Transverse colon (tissue), 4 donors: ENCODE measurements at regions of chr7 and their contacts with region 1.

Region 1: GRCh38 chr7:17298207-17298839 is at the start of gene AHR:
- DNase-seq: peak; percentile 95
- H3K4me3 ChIP-seq: peak within 1 kb of the TSS; percentile 69 to 95 (median 83)
- H3K27ac ChIP-seq: peak within 1 kb of the TSS; percentile 93 to 98 (median 98)
- H3K4me1 ChIP-seq: peaks cover 0 to 24% (median 9%) of the 10 kb centered on the region in 4 donors
- H3K27me3 ChIP-seq: no peaks in the 10 kb centered on the region
- CTCF ChIP-seq: no peak
- EP300 ChIP-seq: no peak
- POLR2A ChIP-seq: peak; percentile 96
- total RNA-seq, gene AHR: 18.1 to 54.6 (median 43.7) TPM

Region 2: DNA sequence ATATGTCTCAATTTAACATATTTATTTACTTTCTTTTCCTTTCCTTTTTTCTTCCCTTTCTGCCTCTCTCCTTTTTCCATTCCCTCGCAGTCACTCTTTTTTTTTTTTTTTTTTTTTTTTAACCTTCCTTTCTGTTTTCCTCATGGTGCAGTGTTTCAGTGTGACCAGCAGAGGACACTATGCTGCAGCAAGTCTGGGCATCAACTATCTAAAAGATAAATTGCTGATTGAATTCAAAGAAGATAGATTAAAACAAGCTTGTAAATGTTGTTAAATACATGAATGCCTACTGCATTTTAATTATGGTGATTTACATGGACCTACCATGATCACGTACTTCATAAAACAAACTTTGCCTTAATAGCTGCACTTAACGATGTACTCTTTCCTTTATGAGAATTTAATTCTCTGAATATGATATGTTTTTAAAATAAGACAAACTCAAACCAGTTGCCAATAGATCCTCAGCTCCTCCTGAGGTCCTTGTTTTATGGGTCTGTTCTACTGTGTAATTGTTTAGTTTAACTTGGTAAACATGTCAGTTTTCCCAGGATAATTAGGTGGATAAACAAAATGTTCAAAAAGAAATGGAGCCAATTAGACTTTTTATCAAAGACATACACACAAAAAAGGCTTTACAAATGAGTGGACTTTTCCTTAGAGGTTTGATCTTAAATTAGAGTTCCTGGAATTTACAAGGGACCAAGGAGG is 315.5 kb before region 1 on chr7:
- in situ Hi-C with region 1: loop called in 3 of 4 experiments (anchors 10 to 25 kb)
- intact Hi-C with region 1: no loop called
- DNase-seq: peak; percentile 14
- H3K4me3 ChIP-seq: no peak overlapping the region
- H3K27ac ChIP-seq: peak overlapping the region in 2 of 4 donors; percentile 12 to 13
- H3K4me1 ChIP-seq: peaks cover 5 to 35% (median 13%) of the 10 kb centered on the region in 4 donors
- H3K27me3 ChIP-seq: no peaks in the 10 kb centered on the region
- CTCF ChIP-seq: peak; percentile 88 to 95 (median 92)
- EP300 ChIP-seq: no peak
- POLR2A ChIP-seq: no peak

Region 3: DNA sequence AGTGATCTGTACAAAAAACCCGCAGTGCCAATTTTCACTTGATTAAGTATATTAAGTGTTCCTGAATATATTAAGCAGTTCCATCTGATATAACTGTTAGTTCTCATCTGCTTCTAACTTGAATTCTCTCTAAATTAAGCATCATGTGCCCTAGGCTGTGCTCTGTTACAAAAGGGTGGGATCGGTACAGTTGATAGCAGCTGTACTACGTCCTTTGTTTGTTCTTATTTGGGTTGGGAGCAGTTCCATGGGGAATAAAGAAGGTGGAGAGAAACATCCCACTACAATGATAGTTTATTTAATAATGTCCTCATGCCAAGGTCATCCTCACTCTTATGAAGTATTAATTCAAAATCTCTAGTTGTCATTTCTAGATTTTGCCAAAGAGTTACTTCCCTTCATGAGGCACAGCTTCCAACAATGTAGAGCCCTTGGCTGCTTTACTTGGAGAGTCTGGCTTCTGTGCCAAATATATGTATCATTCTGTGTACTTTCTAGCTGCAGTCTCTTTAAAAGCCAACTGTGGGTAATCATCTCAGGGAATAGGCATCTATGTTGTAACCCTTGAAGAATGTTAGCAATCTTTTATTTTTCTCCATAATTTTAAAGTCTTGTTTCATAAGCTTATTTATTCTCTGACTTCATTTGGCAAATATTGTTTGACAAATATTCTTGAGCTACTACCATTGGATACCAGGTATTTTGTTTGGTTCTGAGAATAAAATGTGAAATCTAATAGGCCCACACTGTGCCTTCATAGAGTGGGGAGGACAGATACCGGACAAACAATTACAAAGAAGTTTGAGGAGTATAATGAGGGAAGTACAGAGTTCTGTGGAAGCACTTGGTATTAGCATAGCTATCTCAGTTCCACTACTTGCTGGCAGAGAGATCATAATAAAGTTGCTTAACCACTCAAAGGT is 22.3 kb before region 1 on chr7:
- in situ Hi-C with region 1: no loop called
- intact Hi-C with region 1: no loop called
- DNase-seq: no peak
- H3K4me3 ChIP-seq: no peak overlapping the region
- H3K27ac ChIP-seq: peak overlapping the region; percentile 28 to 42 (median 38)
- H3K4me1 ChIP-seq: peaks cover 0 to 10% (median 3%) of the 10 kb centered on the region in 4 donors
- H3K27me3 ChIP-seq: no peaks in the 10 kb centered on the region
- CTCF ChIP-seq: no peak
- EP300 ChIP-seq: no peak
- POLR2A ChIP-seq: no peak

Region 4: GRCh38 chr7:17530741-17531417 is 232.6 kb after region 1 on chr7:
- in situ Hi-C with region 1: loop called in 1 of 4 experiments (anchors 10 kb)
- intact Hi-C with region 1: no loop called
- DNase-seq: no peak
- H3K4me3 ChIP-seq: no peak overlapping the region
- H3K27ac ChIP-seq: no peak overlapping the region
- H3K4me1 ChIP-seq: peaks cover 0 to 14% (median 0%) of the 10 kb centered on the region in 4 donors
- H3K27me3 ChIP-seq: no peaks in the 10 kb centered on the region
- CTCF ChIP-seq: peak in 3 of 5 experiments; percentile 6 to 13 (median 8)
- EP300 ChIP-seq: no peak
- POLR2A ChIP-seq: no peak

Region 5: DNA sequence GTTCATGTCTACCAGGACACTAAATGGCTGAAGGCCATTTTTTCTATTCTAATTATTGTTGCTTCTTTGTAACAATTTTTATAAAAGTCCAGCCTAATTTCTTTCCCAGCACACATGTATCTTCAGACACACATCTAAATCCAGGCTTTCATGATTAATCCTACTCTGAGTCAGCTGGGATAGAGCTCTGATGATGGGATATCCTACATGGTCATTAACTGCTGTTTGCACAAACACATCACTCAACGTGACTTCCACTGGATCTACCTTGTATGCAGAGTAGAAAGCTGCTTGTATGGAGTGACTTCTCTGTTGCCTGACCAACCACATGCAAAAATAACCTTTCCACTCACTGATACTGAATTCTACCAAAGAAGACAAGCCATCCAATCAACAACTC is 261.1 kb after region 1 on chr7:
- in situ Hi-C with region 1: no loop called
- intact Hi-C with region 1: no loop called
- DNase-seq: no peak
- H3K4me3 ChIP-seq: no peak overlapping the region
- H3K27ac ChIP-seq: peak overlapping the region; percentile 44 to 65 (median 56)
- H3K4me1 ChIP-seq: peaks cover 6 to 37% (median 24%) of the 10 kb centered on the region in 4 donors
- H3K27me3 ChIP-seq: no peaks in the 10 kb centered on the region
- CTCF ChIP-seq: no peak
- EP300 ChIP-seq: no peak
- POLR2A ChIP-seq: no peak

Region 6: DNA sequence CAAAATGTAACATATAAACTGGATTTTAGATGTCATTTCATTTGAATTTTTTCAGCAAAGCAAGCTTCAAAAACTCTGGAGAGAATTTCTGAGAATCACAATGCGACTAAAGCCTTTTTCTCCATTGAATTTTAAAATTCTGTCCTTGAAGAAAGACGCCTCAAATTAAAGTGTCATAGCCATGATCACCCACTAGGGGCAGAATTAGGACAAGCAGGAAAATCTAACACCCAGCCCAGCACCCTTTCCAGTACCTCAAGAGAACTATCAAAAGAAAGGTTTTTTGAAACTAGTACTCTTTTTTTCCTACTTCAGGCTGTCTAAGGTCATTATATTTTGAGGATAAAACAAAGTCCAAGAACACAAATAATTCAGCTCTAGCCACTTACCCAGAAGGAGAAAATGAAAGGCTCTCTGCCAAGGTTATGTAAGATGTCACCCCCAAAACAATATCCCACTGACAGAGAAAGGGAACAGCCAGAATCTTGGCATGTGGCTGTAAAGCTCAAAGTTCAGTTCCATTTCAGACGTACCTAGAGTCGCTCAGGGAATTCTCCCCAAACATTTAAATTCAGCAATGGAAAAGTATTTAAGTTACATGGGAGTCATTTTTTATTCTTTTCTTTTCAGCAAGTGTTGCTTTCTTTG is 342.5 kb after region 1 on chr7:
- in situ Hi-C with region 1: loop called in 1 of 4 experiments (anchors 25 kb)
- intact Hi-C with region 1: no loop called
- DNase-seq: no peak
- H3K4me3 ChIP-seq: no peak overlapping the region
- H3K27ac ChIP-seq: no peak overlapping the region
- H3K4me1 ChIP-seq: no peaks in the 10 kb centered on the region
- H3K27me3 ChIP-seq: no peaks in the 10 kb centered on the region
- CTCF ChIP-seq: peak; percentile 55 to 68 (median 65)
- EP300 ChIP-seq: no peak
- POLR2A ChIP-seq: no peak

Region 7: GRCh38 chr7:17940302-17940883 is 642.1 kb after region 1 on chr7 and contains the start of gene SNX13:
- in situ Hi-C with region 1: loop called in 1 of 4 experiments (anchors 25 kb)
- intact Hi-C with region 1: no loop called
- DNase-seq: peak; percentile 92
- H3K4me3 ChIP-seq: peak within 1 kb of the TSS; percentile 57 to 89 (median 74)
- H3K27ac ChIP-seq: peak within 1 kb of the TSS; percentile 91 to 96 (median 92)
- H3K4me1 ChIP-seq: peaks cover 6 to 46% (median 16%) of the 10 kb centered on the region in 4 donors
- H3K27me3 ChIP-seq: no peaks in the 10 kb centered on the region
- CTCF ChIP-seq: peak in 3 of 5 experiments; percentile 15 to 34 (median 32)
- EP300 ChIP-seq: no peak
- POLR2A ChIP-seq: peak; percentile 79
- total RNA-seq, gene SNX13: 11.3 to 83.8 (median 69.0) TPM